Activated CD4-positive, alpha-beta memory T cell treated with anti-CD3 and anti-CD28 coated beads for 36 hours (primary cell): ENCODE measurements at regions of chr4 and their contacts with region 1.

Region 1: GRCh38 chr4:147866532-147867271 is 134.8 kb downstream of the ARHGAP10 start:
- DNase-seq: peak; percentile 94
- H3K4me3 Mint-ChIP-seq: no peak overlapping the region
- H3K27ac Mint-ChIP-seq: no peak overlapping the region
- H3K4me1 Mint-ChIP-seq: peaks cover 7% of the 10 kb centered on the region
- H3K27me3 Mint-ChIP-seq: no peaks in the 10 kb centered on the region

Region 2: DNA sequence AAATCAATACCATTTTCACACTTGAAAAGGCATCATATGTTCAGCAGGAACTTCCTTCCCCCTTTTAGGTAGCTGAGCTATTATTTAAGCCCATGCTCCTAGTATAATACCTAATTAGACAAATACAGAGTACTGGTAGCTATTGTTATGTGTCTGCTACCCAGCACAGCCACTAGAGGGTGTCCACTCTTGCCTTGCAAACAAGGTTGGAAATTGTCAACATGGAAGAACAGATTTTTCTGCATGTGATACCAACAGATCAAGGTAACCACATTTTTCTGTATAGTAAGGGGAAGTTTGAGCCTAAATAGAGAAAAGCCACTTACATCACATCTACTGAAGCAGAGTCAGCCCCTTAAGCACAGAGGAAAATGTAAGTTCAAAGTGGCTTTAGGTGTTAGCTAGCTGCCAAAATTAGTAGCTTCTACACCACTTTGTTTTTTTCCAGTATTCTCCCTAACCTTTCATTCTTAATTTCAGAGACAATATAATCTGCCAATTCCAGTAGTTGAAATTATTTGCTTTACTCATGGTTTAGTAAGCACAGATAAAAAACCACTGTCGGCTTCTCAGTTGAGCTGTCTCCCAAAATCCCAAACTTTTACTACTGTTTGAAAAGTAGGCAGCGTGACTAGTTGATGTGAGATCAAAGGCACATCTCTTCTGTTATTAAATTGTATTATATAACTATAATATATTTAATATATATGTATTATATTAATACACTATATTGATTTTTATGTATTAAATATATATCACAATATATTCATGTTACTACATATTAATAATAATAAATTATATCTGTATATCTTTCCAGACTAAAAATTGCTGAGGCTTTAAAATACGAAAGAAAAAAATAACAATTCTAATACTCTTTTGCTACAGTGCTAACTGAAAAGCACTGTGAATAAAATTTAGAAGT is 347.6 kb before region 1 on chr4:
- CTCF ChIA-PET with region 1: interaction called, 41 read pairs
- POLR2A ChIA-PET with region 1: no interaction called
- intact Hi-C with region 1: loop called (anchors 1 kb)
- DNase-seq: peak; percentile 57
- H3K4me3 Mint-ChIP-seq: no peak overlapping the region
- H3K27ac Mint-ChIP-seq: no peak overlapping the region
- H3K4me1 Mint-ChIP-seq: no peaks in the 10 kb centered on the region
- H3K27me3 Mint-ChIP-seq: peaks cover 6% of the 10 kb centered on the region

Region 3: DNA sequence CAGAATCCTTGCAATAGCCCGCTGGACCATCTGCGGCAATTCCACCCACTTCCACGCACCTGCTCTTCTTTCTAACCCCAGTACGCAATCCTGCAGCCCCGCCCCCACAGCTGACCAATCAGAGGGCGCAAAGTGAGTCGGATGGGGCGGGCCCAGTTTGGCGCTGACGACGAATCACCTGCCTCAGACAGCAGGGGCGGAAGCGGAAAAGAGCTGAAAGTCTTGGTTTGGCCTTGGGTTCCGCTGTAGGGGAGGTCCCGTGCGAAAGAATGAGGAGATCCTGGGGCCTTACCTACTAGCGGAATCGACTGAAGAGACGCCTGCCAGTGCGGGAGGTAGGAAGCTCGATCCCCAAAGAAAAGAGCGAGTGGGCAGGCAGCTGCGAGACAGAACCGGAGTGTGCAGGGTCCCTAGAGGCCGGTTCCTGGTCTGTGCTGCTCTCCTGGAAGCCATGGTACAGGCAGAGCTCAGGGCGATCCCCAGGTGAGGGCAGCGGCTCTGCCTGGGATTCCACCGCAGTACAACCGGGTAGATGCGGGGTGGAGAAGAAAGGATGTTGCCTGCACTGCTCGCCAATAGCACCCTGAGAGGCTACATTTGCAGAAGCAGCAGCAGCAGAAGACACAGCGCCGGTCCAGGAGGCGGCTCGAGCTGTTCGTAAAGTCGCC is 249.4 kb before region 1 on chr4 and contains the start of gene TMEM184C:
- CTCF ChIA-PET with region 1: interaction called, 40 read pairs
- POLR2A ChIA-PET with region 1: no interaction called
- intact Hi-C with region 1: loop called (anchors 2 kb)
- DNase-seq: peak; percentile 99
- H3K4me3 Mint-ChIP-seq: peak within 1 kb of the TSS; percentile 100
- H3K27ac Mint-ChIP-seq: peak within 1 kb of the TSS; percentile 98
- H3K4me1 Mint-ChIP-seq: peaks cover 25% of the 10 kb centered on the region
- H3K27me3 Mint-ChIP-seq: no peaks in the 10 kb centered on the region
- total RNA-seq, gene TMEM184C: 15.5 to 15.7 TPM

Region 4: DNA sequence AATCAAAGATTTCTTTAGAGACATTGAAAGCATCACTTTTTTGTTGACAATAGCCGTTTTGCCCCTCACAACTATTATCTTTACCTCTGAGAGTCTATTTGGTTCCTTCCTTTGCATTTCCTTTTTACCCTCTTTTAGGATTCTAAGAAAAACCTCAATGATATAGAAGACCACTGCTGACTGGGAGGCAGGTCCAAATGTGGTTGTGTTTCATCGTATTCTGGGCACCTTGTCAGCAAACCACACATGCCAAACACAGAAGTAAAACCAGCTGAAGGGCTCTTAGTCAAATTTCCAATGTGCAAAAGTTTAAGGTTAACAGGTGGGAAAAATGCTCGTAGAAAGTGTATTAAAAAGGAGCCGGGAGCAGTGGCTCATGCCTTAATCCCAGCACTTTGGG is 177.6 kb before region 1 on chr4:
- CTCF ChIA-PET with region 1: interaction called, 60 read pairs
- POLR2A ChIA-PET with region 1: no interaction called
- intact Hi-C with region 1: loop called (anchors 1 kb)
- DNase-seq: peak; percentile 27
- H3K4me3 Mint-ChIP-seq: no peak overlapping the region
- H3K27ac Mint-ChIP-seq: no peak overlapping the region
- H3K4me1 Mint-ChIP-seq: peaks cover 8% of the 10 kb centered on the region
- H3K27me3 Mint-ChIP-seq: peaks cover 6% of the 10 kb centered on the region

Region 5: DNA sequence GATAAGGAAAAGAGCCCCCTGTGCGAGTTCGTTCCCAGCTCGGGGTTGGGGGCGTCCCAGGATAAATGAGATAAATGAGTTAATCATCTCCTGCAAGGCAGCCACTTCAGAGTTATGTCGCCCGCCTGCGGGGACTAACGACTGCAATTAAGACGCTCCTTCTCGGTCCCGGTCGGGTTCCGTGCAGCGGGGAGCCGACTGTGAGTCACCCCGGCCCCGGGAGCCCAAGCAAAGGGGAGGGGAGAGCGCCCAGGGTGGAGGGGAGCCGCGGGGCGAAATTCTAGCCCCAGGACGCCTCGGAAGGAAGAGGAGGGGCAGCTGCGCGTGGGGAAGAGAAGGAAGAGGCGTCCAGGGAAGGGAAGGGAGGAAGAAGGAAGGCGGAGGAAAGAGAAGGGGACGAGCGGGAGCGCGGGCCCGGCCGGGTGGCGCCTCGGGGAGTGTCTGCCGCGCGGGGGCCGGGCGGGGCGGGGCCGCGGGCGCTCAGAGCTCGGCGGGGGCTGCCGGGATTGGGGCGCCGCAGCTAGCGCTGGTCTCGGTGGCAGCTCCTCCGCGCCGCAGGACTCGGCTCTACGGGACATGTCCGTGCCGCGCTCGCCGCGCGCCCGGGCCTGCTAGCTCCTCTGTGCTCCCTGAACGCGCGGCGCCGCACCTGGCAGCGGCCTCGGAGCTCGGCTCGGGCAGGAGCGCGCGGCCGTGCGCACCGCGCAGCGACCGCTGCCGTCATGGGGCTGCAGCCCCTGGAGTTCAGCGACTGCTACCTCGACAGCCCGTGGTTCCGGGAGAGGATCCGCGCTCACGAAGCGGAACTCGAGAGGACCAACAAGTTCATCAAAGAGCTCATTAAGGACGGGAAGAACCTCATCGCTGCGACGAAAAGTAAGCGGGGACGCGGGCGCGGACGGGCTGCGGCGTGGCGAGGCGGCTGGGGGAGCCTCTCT is 134.9 kb before region 1 on chr4 and contains the start of gene ARHGAP10:
- CTCF ChIA-PET with region 1: interaction called, 70 read pairs
- POLR2A ChIA-PET with region 1: no interaction called
- intact Hi-C with region 1: no loop called
- DNase-seq: peak; percentile 78
- H3K4me3 Mint-ChIP-seq: peak within 1 kb of the TSS; percentile 83
- H3K27ac Mint-ChIP-seq: peak within 1 kb of the TSS; percentile 77
- H3K4me1 Mint-ChIP-seq: peaks cover 42% of the 10 kb centered on the region
- H3K27me3 Mint-ChIP-seq: no peaks in the 10 kb centered on the region
- total RNA-seq, gene ARHGAP10: 7.1 to 8.0 TPM

Region 6: DNA sequence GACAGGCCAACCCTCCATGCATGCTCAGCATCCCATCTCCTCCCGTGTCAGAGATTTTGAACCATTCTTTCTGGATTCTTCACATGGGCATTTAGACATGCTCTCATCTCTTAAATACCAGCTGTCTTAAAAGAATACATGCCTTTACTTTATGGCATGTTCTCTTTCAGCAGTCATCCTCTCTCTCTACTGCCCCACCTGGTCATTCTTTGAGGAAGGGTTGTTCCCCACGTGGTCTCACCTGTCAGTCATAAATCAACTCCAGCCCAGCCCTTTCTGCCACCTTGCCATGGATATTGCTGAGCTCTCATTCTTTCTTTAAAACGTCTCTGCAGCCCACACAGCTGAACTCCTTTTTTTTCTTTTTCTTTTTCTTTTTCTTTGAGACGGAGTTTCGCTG is 23.5 kb before region 1 on chr4:
- CTCF ChIA-PET with region 1: interaction called, 55 read pairs
- POLR2A ChIA-PET with region 1: no interaction called
- intact Hi-C with region 1: no loop called
- DNase-seq: peak; percentile 20
- H3K4me3 Mint-ChIP-seq: no peak overlapping the region
- H3K27ac Mint-ChIP-seq: no peak overlapping the region
- H3K4me1 Mint-ChIP-seq: peaks cover 5% of the 10 kb centered on the region
- H3K27me3 Mint-ChIP-seq: no peaks in the 10 kb centered on the region

Region 7: GRCh38 chr4:148288448-148288847 is 421.7 kb after region 1 on chr4:
- CTCF ChIA-PET with region 1: no interaction called
- POLR2A ChIA-PET with region 1: no interaction called
- intact Hi-C with region 1: no loop called
- DNase-seq: no peak
- H3K4me3 Mint-ChIP-seq: no peak overlapping the region
- H3K27ac Mint-ChIP-seq: no peak overlapping the region
- H3K4me1 Mint-ChIP-seq: peaks cover 19% of the 10 kb centered on the region
- H3K27me3 Mint-ChIP-seq: no peaks in the 10 kb centered on the region